ENCODE measurements at regions of chr2 and their contacts with region 1.

Region 1: DNA sequence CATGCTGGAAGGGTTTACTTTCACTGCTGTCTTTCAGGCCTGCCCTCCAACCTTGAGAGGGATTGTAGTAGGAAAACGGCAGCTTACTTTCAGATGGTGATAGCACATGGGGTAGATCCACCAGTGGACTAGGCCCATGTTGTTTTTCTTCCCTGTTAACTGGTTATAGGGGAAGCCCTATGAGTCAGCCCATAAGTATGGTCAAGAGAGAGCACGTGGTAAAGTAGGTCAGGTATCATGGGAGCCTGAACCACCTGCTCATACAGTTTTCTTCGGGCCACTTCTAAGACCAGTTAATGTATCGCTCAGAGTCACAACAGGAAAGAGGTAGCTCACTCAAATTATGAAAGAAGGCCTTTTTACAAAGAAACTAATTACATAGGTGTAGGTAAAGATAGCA is 33.0 kb downstream of the PDK1 start:
- H3K4me3 Mint-ChIP-seq: no peak overlapping the region
- H3K27ac Mint-ChIP-seq: no peak overlapping the region
- H3K4me1 Mint-ChIP-seq: no peaks in the 10 kb centered on the region
- H3K27me3 Mint-ChIP-seq: no peaks in the 10 kb centered on the region

Region 2: DNA sequence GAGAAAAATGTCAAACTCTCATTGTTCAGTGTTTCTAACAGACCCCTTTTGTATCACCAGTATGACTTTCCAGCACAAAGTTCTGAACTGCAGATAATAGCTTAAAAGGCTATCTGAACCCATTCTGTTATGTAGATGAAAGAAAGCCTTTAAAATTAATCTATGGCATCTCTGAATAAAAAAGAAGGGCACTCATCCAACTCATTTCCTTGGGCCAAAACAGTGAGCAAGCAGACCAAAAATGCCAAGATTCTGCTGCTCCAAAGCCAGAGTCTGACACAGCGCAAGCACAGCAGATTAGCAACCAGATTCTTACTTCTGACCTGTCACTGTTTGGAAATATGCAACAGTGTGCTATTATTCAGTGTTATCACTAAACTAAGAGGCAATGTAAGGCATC is 184.1 kb before region 1 on chr2:
- intact Hi-C with region 1: no loop called
- H3K4me3 Mint-ChIP-seq: no peak overlapping the region
- H3K27ac Mint-ChIP-seq: no peak overlapping the region
- H3K4me1 Mint-ChIP-seq: no peaks in the 10 kb centered on the region
- H3K27me3 Mint-ChIP-seq: peaks cover 1% of the 10 kb centered on the region

Region 3: GRCh38 chr2:172710584-172711024 is 121.7 kb after region 1 on chr2:
- intact Hi-C with region 1: loop called (anchors 5 kb)
- H3K4me3 Mint-ChIP-seq: no peak overlapping the region
- H3K27ac Mint-ChIP-seq: no peak overlapping the region
- H3K4me1 Mint-ChIP-seq: no peaks in the 10 kb centered on the region
- H3K27me3 Mint-ChIP-seq: peaks cover 32% of the 10 kb centered on the region

Region 4: GRCh38 chr2:172995323-172996244 is 406.7 kb after region 1 on chr2:
- intact Hi-C with region 1: no loop called
- H3K4me3 Mint-ChIP-seq: no peak overlapping the region
- H3K27ac Mint-ChIP-seq: no peak overlapping the region
- H3K4me1 Mint-ChIP-seq: peaks cover 46% of the 10 kb centered on the region
- H3K27me3 Mint-ChIP-seq: peaks cover under 1% of the 10 kb centered on the region

Measured in dendritic cell treated with granulocyte-macrophage colony-stimulating factor and Interleukin-4, amounts not matched to agents 40 ng/mL and 50 ng/mL, for 4 days (primary cell).